H1 (cell line): ENCODE measurements at regions of chr17 and their contacts with region 1.

Region 1: DNA sequence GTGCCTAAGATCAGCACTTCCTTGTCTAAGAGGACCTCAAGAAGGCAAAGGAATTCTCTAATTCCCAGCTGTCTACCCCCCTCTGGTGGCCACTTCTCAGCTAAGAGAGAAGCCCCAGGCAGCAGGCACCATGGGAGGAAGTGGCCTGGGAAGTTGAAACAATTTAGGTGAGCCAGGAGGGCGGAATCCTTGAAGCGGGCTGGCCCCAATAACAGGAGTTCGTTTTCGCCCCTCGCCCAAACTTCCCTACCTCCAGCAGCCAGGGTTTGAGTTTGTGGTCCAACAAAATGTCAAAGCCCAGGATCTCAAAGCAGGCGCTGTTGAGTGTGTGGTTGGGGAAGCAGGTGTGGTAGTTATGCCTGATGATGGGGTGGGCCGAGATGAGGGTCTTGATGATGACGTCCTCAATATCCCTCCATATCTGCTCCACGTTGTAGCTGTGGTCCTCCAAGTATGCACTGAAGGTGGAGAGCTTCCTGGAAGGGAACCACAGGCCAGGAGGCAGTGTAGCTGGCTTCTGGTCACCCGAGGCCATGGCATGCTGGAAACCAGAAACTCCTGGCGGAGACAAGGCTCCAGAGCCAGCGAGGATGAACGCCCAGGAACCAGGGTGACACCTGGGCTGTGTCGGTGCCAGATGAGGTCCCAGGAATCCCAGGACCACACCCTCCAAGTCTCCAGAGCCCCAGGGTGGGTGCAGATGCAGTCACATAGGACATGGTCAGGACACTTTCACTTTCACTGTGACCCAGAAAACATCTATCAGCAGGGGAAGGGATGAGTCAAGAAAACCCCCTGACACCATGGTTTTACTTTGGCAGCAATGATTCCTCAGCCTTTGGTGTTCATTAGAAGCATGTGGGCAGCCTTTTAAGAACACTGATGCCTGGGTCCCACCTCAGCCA is 25.6 kb downstream of the TTLL6 start:
- DNase-seq: peak; percentile 70 to 85
- H3K4me3 ChIP-seq: no peak overlapping the region
- H3K27ac ChIP-seq: no peak overlapping the region
- H3K4me1 ChIP-seq: peaks cover 0 to 3% (median 0%) of the 10 kb centered on the region in 4 experiments; a peak in 2 of 7 replicates
- H3K27me3 ChIP-seq: peaks cover 0 to 6% (median 1%) of the 10 kb centered on the region in 4 experiments; a peak in 2 of 7 replicates
- CTCF ChIP-seq: peak; percentile 61 to 94 (median 81)
- EP300 ChIP-seq: no peak
- POLR2A ChIP-seq: no peak
- RAD21 ChIP-seq: peak; percentile 84 to 88

Region 2: GRCh38 chr17:48671697-48672171 is 119.6 kb before region 1 on chr17:
- CTCF ChIA-PET with region 1: interaction called, 159 read pairs
- POLR2A ChIA-PET with region 1: no interaction called
- DNase-seq: peak; percentile 13 to 93
- H3K4me3 ChIP-seq: peak overlapping the region in 3 of 4 experiments; percentile 16 to 49 (median 32); a peak in 4 of 8 replicates
- H3K27ac ChIP-seq: no peak overlapping the region
- H3K4me1 ChIP-seq: no peaks in the 10 kb centered on the region; a peak in 1 of 7 replicates
- H3K27me3 ChIP-seq: peaks cover 0 to 9% (median 5%) of the 10 kb centered on the region in 4 experiments; a peak in 4 of 7 replicates
- CTCF ChIP-seq: peak; percentile 71 to 92 (median 84)
- EP300 ChIP-seq: no peak
- POLR2A ChIP-seq: no peak
- RAD21 ChIP-seq: peak; percentile 93 to 95

Region 3: GRCh38 chr17:48704361-48705248 is 86.8 kb before region 1 on chr17:
- CTCF ChIA-PET with region 1: interaction called, 11 read pairs
- POLR2A ChIA-PET with region 1: no interaction called
- DNase-seq: no peak
- H3K4me3 ChIP-seq: no peak overlapping the region
- H3K27ac ChIP-seq: no peak overlapping the region
- H3K4me1 ChIP-seq: no peaks in the 10 kb centered on the region
- H3K27me3 ChIP-seq: peaks cover 0 to 13% (median 5%) of the 10 kb centered on the region in 4 experiments; a peak in 4 of 7 replicates
- CTCF ChIP-seq: no peak
- EP300 ChIP-seq: no peak
- POLR2A ChIP-seq: no peak
- RAD21 ChIP-seq: no peak

Region 4: DNA sequence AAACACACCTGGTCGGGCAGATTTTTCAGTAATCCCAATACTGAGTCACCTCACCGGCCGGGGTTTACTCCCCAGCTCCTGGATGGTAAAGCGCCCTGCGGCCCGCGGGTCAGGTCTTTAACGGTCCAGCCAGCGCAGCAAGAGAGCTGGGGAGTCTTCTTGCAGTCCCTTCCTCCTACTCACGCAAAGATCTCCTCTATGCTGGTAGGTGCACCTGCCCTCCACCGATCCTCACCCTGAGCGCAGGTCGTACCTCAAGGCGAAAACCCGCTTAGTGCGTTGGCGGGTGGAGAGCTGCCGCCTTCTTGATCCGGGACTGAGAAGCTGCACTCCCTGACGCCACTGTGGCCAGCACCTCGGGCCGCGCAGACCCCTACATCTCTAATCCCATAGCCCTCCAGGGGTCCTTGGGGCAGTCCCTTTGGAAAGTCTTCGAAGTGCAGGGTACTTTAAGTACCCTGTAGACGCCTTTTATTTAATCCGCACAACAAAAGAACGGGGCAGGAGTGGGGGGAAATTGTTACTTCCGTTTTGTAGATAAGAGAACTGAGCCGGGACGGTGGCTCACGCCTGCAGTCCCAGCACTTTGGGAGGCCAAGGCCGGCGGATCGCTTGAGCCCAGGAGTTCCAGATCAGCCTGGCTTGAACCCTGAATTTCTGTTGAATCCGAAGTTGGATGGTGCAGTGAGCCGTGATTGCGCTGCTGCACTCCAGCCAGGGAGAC is 52.4 kb before region 1 on chr17:
- CTCF ChIA-PET with region 1: interaction called, 22 read pairs
- POLR2A ChIA-PET with region 1: no interaction called
- DNase-seq: peak in 1 of 2 experiments; percentile 65
- H3K4me3 ChIP-seq: no peak overlapping the region
- H3K27ac ChIP-seq: no peak overlapping the region
- H3K4me1 ChIP-seq: no peaks in the 10 kb centered on the region; a peak in 2 of 7 replicates
- H3K27me3 ChIP-seq: peaks cover 92 to 100% (median 100%) of the 10 kb centered on the region in 4 experiments
- CTCF ChIP-seq: no peak
- EP300 ChIP-seq: no peak
- POLR2A ChIP-seq: no peak
- RAD21 ChIP-seq: no peak

Region 5: GRCh38 chr17:48756830-48757251 is 34.5 kb before region 1 on chr17:
- CTCF ChIA-PET with region 1: interaction called, 186 read pairs
- POLR2A ChIA-PET with region 1: no interaction called
- DNase-seq: no peak
- H3K4me3 ChIP-seq: no peak overlapping the region
- H3K27ac ChIP-seq: no peak overlapping the region
- H3K4me1 ChIP-seq: peaks cover 0 to 7% (median 3%) of the 10 kb centered on the region in 4 experiments; a peak in 4 of 7 replicates
- H3K27me3 ChIP-seq: peaks cover 63 to 88% (median 80%) of the 10 kb centered on the region in 4 experiments
- CTCF ChIP-seq: no peak
- EP300 ChIP-seq: no peak
- POLR2A ChIP-seq: no peak
- RAD21 ChIP-seq: no peak

Region 6: GRCh38 chr17:48804925-48805411 is 13.6 kb after region 1 on chr17:
- CTCF ChIA-PET with region 1: interaction called, 23 read pairs
- POLR2A ChIA-PET with region 1: interaction called, 4 read pairs
- DNase-seq: peak; percentile 68 to 97
- H3K4me3 ChIP-seq: peak overlapping the region in 1 of 4 experiments; percentile 35; a peak in 3 of 8 replicates
- H3K27ac ChIP-seq: no peak overlapping the region
- H3K4me1 ChIP-seq: no peaks in the 10 kb centered on the region; a peak in 2 of 7 replicates
- H3K27me3 ChIP-seq: peaks cover 0 to 2% (median 0%) of the 10 kb centered on the region in 4 experiments; a peak in 1 of 7 replicates
- CTCF ChIP-seq: peak; percentile 90 to 93 (median 90)
- EP300 ChIP-seq: no peak
- POLR2A ChIP-seq: no peak
- RAD21 ChIP-seq: peak; percentile 98

Region 7: GRCh38 chr17:48816774-48817590 is 25.6 kb after region 1 on chr17 and contains the start of gene TTLL6:
- CTCF ChIA-PET with region 1: interaction called, 11 read pairs
- POLR2A ChIA-PET with region 1: interaction called, 4 read pairs
- DNase-seq: peak; percentile 89 to 90
- H3K4me3 ChIP-seq: peak within 1 kb of the TSS; percentile 73 to 90 (median 83)
- H3K27ac ChIP-seq: peak within 1 kb of the TSS; percentile 76
- H3K4me1 ChIP-seq: peaks cover 15 to 18% (median 17%) of the 10 kb centered on the region in 4 experiments
- H3K27me3 ChIP-seq: no peaks in the 10 kb centered on the region
- CTCF ChIP-seq: no peak
- EP300 ChIP-seq: peak in 1 of 2 experiments; percentile 65; a peak in 1 of 3 replicates
- POLR2A ChIP-seq: peak in 1 of 2 experiments; percentile 87; a peak in 2 of 3 replicates
- RAD21 ChIP-seq: no peak
- total RNA-seq, gene TTLL6: 2.6 and 2.7 TPM in 2 replicates